Posterior vena cava (tissue), 2 donors: ENCODE measurements at regions of chr14 and their contacts with region 1.

Region 1: DNA sequence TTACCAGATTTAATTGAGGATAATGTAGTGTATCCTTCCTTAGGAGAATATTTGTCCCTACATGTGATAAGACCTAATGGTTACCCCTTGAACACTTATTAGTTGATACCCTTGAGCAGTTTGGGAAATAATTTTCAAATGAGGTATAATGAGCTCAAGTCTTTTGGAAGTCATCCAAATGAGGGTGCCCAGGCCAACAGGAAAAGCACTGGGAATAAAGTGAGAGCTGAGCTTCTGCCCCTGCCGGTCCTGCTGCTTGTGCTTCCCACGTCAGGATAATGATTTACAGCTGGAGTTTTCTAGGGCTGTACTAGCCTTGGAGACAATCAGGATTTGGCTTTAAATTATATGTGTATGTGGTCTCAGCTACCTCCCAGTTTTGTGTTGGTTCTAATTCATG is 178.8 kb upstream of the FRMD6 start:
- DNase-seq: no peak

Region 2: DNA sequence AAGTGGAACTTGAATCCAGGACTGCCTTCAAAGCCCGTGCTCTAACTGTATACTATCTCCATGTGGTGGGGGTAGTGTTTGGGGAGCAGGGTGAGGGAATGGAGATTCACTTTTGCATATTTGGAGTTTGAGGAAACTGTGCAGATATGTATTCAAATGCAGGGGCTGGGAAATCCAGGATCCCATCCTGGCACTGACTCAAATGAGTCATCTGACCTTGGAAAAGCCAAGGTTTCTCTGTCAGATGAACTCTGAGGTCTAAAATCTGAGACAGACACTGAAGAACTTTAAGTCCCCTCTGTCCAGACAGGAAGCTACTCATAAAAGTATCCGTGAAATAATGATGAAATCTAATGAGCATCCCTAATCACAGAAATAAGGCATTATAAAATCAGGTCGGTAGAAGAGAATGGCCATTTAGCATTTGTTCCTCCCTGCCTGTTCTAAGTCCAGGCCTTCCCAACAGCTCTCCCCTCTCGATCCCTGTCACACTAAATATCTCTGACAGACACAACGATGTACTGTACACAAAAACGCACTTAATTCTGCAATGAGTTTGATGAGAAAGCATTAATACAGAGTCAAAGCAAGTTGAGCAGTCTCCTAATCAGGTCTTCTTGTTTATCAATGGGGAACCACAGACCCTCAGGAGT is 656.4 kb before region 1 on chr14:
- intact Hi-C with region 1: loop called in 1 of 2 experiments (anchors 5 kb)
- DNase-seq: no peak

Region 3: DNA sequence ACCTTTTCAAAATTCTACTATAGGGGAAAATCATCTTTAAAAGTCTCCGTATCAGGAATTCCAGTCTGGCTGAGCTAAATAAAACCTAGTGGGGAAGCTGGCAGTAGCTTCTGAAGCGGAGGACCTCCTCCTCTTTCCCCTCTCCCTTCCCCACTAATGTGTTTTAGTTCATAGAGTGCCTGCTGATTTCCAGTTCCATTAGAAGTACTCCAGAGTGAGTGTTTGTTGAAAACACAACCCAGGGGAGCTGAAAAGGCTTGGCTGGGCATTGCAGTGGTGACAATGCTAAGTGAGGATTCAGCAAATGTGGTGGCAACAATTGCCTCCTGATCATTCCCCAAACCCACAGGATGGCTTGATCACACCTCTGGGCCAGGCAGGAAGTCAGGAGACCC is 34.6 kb after region 1 on chr14:
- intact Hi-C with region 1: no loop called
- DNase-seq: no peak